ENCODE measurements at regions of chr15 and their contacts with region 1.

Region 1: GRCh38 chr15:28123408-28124023 is 24.4 kb upstream of the OCA2 start:
- DNase-seq: peak; percentile 57
- ATAC-seq: peak; percentile 95
- H3K4me3 ChIP-seq: no peak overlapping the region
- H3K27ac ChIP-seq: no peak overlapping the region
- H3K4me1 ChIP-seq: no peaks in the 10 kb centered on the region
- H3K27me3 ChIP-seq: no peaks in the 10 kb centered on the region
- CTCF ChIP-seq: peak; percentile 81
- EP300 ChIP-seq: no peak
- POLR2A ChIP-seq: no peak
- RAD21 ChIP-seq: no peak; the same call in 1 of the 2 replicates

Region 2: GRCh38 chr15:28086175-28086703 is 37.3 kb before region 1 on chr15:
- CTCF ChIA-PET with region 1: interaction called, 14 read pairs
- POLR2A ChIA-PET with region 1: no interaction called
- in situ Hi-C with region 1: no loop called
- intact Hi-C with region 1: loop called (anchors 1 kb)
- DNase-seq: peak; percentile 60
- ATAC-seq: peak; percentile 98
- H3K4me3 ChIP-seq: no peak overlapping the region
- H3K27ac ChIP-seq: no peak overlapping the region
- H3K4me1 ChIP-seq: peaks cover 14% of the 10 kb centered on the region
- H3K27me3 ChIP-seq: no peaks in the 10 kb centered on the region
- CTCF ChIP-seq: peak; percentile 82
- EP300 ChIP-seq: no peak
- POLR2A ChIP-seq: no peak
- RAD21 ChIP-seq: no peak